GM12878 (cell line): ENCODE measurements at regions of chr12 and their contacts with region 1.

Region 1: GRCh38 chr12:93098077-93098476 is 169.0 kb upstream of the EEA1 start:
- DNase-seq: peak; percentile 51
- ATAC-seq: peak; percentile 80
- H3K4me3 ChIP-seq: no peak overlapping the region
- H3K27ac ChIP-seq: no peak overlapping the region
- H3K4me1 ChIP-seq: peaks cover 20% of the 10 kb centered on the region
- H3K27me3 ChIP-seq: no peaks in the 10 kb centered on the region
- CTCF ChIP-seq: peak; percentile 36 to 54 (median 52)
- EP300 ChIP-seq: no peak
- POLR2A ChIP-seq: no peak
- RAD21 ChIP-seq: peak; percentile 80

Region 2: DNA sequence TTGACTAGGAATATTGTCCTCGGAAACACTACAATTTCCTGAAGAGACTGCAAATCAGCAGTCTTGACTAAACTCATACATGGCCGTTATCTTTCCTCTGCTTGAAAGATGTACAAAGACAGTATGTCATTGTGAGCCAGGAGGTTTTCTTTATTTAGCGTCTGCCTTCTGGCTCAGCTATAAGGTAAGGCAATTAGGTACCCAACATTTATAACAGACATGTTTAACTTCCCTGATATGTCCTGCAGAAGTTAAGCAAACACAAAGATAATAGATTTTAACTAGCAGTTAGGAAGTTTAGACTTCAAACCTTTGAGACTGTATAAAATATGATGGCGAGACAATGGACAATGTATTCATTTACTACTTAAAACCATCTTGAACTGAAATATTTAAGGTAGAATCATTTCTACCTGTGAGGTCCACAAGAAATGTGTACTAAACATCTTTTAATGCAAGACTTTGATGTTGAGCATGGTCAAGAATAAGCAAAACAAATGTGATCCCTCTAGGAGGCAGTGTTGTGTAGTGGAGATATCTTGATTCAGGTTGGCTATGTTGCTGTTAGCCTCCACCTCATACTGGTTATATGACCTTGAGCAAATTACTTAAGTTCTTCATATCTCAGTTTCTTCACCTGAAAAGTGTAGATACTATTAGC is 72.8 kb before region 1 on chr12:
- CTCF ChIA-PET with region 1: interaction called, 10 read pairs
- POLR2A ChIA-PET with region 1: no interaction called
- RAD21 ChIA-PET with region 1: interaction called, 4 read pairs
- SMC1A ChIA-PET with region 1: interaction called, 6 read pairs
- in situ Hi-C with region 1: no loop called
- intact Hi-C with region 1: loop called (anchors 5 kb)
- DNase-seq: peak; percentile 63
- ATAC-seq: peak; percentile 99
- H3K4me3 ChIP-seq: no peak overlapping the region
- H3K27ac ChIP-seq: no peak overlapping the region
- H3K4me1 ChIP-seq: no peaks in the 10 kb centered on the region
- H3K27me3 ChIP-seq: no peaks in the 10 kb centered on the region
- CTCF ChIP-seq: peak; percentile 61 to 70 (median 69); a peak in 5 of 6 replicates
- EP300 ChIP-seq: no peak
- POLR2A ChIP-seq: no peak
- RAD21 ChIP-seq: peak; percentile 91

Region 3: DNA sequence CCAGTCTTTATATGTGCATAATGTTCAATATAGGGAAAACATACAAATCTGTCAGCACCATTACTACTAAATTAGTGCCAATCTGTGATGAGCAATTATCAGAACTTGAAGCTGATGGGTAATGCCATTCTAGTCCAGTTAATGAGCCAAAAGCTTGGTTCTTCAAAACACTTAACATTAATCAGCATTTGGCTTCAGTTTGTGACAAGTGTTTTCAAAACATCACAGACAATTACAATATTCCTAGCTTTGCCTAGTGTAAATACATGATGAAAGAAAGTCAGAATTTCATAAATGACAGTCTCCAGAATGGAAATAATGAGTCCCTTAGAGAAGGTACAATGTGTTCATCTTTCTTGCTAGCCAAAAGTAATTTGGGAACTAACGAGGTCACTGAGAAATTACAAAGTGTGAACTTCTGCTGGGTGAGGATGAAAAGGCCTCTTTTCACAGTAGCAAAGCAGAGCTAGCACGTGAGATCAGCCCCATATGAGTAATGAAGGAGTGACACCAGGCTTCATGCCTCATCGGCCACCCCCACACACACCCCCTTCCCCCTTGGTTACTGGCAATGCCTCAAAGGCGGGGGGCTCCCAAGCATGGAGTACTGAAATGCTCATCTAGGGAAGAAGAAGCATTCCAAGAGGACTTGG is 11.6 kb after region 1 on chr12:
- CTCF ChIA-PET with region 1: interaction called, 88 read pairs
- POLR2A ChIA-PET with region 1: interaction called, 25 read pairs
- RAD21 ChIA-PET with region 1: interaction called, 47 read pairs
- SMC1A ChIA-PET with region 1: interaction called, 75 read pairs
- in situ Hi-C with region 1: no loop called
- intact Hi-C with region 1: no loop called
- DNase-seq: no peak
- ATAC-seq: peak; percentile 95
- H3K4me3 ChIP-seq: no peak overlapping the region
- H3K27ac ChIP-seq: no peak overlapping the region
- H3K4me1 ChIP-seq: peaks cover 14% of the 10 kb centered on the region
- H3K27me3 ChIP-seq: no peaks in the 10 kb centered on the region
- CTCF ChIP-seq: no peak
- EP300 ChIP-seq: peak; percentile 58 to 77
- POLR2A ChIP-seq: no peak
- RAD21 ChIP-seq: no peak; the same call in 1 of the 2 replicates

Region 4: GRCh38 chr12:93297032-93297431 is 199.0 kb after region 1 on chr12:
- CTCF ChIA-PET with region 1: interaction called, 7 read pairs
- POLR2A ChIA-PET with region 1: no interaction called
- RAD21 ChIA-PET with region 1: interaction called, 11 read pairs
- SMC1A ChIA-PET with region 1: interaction called, 26 read pairs
- in situ Hi-C with region 1: no loop called
- intact Hi-C with region 1: no loop called
- DNase-seq: peak; percentile 75
- ATAC-seq: peak; percentile 95
- H3K4me3 ChIP-seq: peak overlapping the region; percentile 25
- H3K27ac ChIP-seq: peak overlapping the region; percentile 73
- H3K4me1 ChIP-seq: peaks cover 17% of the 10 kb centered on the region
- H3K27me3 ChIP-seq: no peaks in the 10 kb centered on the region
- CTCF ChIP-seq: no peak
- EP300 ChIP-seq: no peak
- POLR2A ChIP-seq: no peak
- RAD21 ChIP-seq: 0 out of 2 replicates have a peak, but pooled peaks have one; percentile 13

Region 5: DNA sequence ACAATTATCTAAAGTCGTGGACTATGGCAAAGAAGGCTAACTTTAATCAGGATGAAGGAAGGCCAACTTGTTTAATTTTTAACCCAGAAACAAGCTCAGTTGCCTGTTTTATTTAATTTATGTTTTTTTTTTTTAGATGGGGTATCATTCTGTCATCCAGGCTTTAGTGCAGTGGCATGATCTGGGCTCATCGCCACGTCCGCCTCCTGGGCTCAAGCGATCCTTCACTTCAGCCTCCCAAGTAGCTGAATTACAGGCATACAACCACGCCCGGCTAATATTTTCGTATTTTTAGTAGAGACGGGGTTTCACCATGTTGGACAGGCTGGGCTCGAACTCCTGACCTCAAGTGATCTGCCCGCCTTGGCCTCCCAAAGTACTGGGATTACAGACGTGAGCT is 299.3 kb after region 1 on chr12:
- CTCF ChIA-PET with region 1: interaction called, 49 read pairs
- POLR2A ChIA-PET with region 1: interaction called, 3 read pairs
- RAD21 ChIA-PET with region 1: interaction called, 25 read pairs
- SMC1A ChIA-PET with region 1: interaction called, 34 read pairs
- in situ Hi-C with region 1: no loop called
- intact Hi-C with region 1: loop called (anchors 2 kb)
- DNase-seq: no peak
- ATAC-seq: no peak
- H3K4me3 ChIP-seq: no peak overlapping the region
- H3K27ac ChIP-seq: no peak overlapping the region
- H3K4me1 ChIP-seq: no peaks in the 10 kb centered on the region; the same call in 1 of the 2 replicates
- H3K27me3 ChIP-seq: no peaks in the 10 kb centered on the region
- CTCF ChIP-seq: no peak
- EP300 ChIP-seq: no peak
- POLR2A ChIP-seq: no peak
- RAD21 ChIP-seq: no peak